SK-N-SH (cell line): ENCODE measurements at regions of chr4 and their contacts with region 1.

Region 1: DNA sequence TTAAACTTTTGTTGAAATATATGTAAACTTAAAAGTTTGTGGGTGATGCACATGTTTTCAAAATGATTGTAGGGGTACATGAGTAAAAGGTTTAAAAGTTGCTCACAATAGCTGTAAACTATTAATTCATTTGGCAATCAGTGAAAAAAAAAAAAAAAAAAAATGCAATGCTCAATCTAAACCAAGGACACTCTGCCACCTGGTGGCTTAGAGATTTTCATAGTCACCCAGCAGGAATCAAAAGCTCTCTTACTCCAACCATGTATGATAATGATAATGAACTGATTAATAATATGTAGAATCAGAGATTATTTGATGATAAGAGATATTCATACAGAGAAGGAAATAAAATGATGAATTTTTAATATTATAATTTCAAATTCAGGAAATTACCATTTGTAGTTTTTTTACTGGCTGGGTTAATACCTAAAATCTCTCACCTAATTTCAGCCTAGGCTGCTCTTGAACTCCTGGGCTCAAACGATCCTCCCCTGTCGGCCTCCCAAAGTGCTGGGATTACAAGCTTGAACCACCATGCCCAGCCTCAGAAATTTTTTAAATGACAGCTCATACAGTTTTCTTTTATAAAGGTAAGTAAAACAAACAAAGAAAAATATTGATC is 46.9 kb upstream of the SLC25A4 start:
- DNase-seq: peak; percentile 60
- H3K4me3 ChIP-seq: no peak overlapping the region
- H3K27ac ChIP-seq: no peak overlapping the region
- H3K4me1 ChIP-seq: peaks cover 0 to 6% of the 10 kb centered on the region in 2 experiments; a peak in 1 of 4 replicates
- H3K27me3 ChIP-seq: no peaks in the 10 kb centered on the region
- CTCF ChIP-seq: peak; percentile 77
- EP300 ChIP-seq: no peak
- RAD21 ChIP-seq: peak; percentile 82

Region 2: GRCh38 chr4:185005216-185005819 is 90.8 kb before region 1 on chr4:
- CTCF ChIA-PET with region 1: interaction called, 29 read pairs
- POLR2A ChIA-PET with region 1: no interaction called
- DNase-seq: peak; percentile 89
- H3K4me3 ChIP-seq: peak overlapping the region; percentile 4 to 35; a peak in 2 of 4 replicates
- H3K27ac ChIP-seq: no peak overlapping the region
- H3K4me1 ChIP-seq: peaks cover 0 to 5% of the 10 kb centered on the region in 2 experiments; a peak in 1 of 4 replicates
- H3K27me3 ChIP-seq: peaks cover 10% of the 10 kb centered on the region; the same call in 1 of the 2 replicates
- CTCF ChIP-seq: peak; percentile 92
- EP300 ChIP-seq: no peak
- RAD21 ChIP-seq: peak; percentile 82

Region 3: DNA sequence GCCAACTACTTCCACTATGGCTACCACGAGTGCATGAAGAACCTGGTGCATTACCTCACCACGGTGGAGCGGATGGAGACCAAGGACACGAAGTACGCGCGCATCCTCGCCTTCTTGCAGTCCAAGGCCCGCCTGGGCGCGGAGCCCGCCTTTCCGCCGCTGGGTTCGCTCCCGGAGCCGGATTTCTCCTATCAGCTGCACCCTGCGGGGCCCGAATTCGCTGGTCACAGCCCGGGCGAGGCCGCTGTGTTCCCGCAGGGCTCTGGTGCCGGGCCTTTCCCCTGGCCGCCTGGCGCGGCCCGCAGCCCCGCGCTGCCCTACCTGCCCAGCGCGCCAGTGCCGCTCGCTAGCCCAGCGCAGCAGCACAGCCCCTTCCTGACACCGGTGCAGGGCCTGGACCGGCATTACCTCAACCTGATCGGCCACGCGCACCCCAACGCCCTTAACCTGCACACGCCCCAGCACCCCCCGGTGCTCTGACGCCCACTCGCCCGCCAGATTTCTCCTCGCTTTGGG is 75.8 kb before region 1 on chr4:
- CTCF ChIA-PET with region 1: interaction called, 19 read pairs
- POLR2A ChIA-PET with region 1: no interaction called
- DNase-seq: peak; percentile 48
- H3K4me3 ChIP-seq: no peak overlapping the region
- H3K27ac ChIP-seq: no peak overlapping the region
- H3K4me1 ChIP-seq: no peaks in the 10 kb centered on the region
- H3K27me3 ChIP-seq: peaks cover 49% of the 10 kb centered on the region
- CTCF ChIP-seq: no peak
- EP300 ChIP-seq: no peak
- RAD21 ChIP-seq: no peak

Region 4: DNA sequence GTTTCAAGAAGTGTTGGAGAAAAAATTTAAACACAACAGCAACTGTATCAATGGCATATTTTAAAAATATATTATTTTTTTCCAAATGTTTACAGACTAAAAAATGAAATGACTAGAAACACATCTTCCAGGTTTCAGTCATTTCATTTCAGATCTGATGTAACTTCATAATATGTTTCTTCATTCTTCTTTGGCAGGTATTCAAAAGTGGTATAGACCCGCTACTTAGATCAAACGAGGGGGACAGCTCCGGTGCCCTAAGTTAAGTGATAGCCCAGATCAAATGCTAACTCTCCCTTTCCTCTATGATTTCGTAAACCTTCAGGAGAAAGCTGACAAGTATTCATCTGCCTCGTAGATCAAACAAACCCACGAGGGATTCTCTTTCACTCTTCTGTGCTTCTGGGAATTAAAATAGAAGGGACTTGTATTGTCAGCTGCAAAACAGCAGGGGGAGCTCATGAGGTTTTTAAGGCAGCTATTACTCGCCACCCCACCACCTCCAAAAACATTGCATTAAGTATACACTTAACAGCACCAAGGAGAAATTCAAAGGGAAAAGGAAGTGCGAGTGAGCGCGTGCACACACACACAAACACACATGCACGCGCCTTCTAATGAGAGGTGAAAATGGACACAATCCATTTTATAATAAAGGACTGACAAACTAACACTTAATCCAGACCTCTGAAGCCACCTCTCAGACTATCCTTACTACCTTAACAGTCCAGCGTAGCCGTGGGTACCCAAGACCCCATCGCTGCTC is 56.5 kb before region 1 on chr4:
- CTCF ChIA-PET with region 1: interaction called, 157 read pairs
- POLR2A ChIA-PET with region 1: no interaction called
- DNase-seq: peak; percentile 74
- H3K4me3 ChIP-seq: peak overlapping the region in 1 of 2 experiments; percentile 12; a peak in 2 of 4 replicates
- H3K27ac ChIP-seq: no peak overlapping the region
- H3K4me1 ChIP-seq: peaks cover 0 to 2% of the 10 kb centered on the region in 2 experiments; a peak in 1 of 4 replicates
- H3K27me3 ChIP-seq: no peaks in the 10 kb centered on the region; the same call in 1 of the 2 replicates
- CTCF ChIP-seq: peak; percentile 92
- EP300 ChIP-seq: no peak
- RAD21 ChIP-seq: peak; percentile 89

Region 5: DNA sequence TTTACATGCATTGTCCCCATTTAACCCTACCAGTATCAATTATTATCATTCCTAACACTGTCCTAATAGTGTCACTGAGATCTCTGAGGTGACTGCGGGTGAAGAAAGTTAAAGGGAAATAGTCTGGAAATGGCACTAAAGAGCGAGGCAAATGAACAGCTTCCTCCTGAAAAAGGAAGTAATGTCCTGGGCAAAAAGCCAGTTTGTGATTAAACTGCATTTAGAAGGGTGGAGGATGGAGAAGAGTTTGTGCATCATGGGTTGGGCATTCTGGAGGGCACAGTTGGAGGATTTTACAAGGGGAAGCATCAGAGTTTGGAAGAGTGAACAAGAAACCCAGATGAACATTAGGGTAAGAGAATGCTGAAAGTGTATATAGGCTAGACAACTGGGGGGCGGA is 13.6 kb before region 1 on chr4:
- CTCF ChIA-PET with region 1: interaction called, 25 read pairs
- POLR2A ChIA-PET with region 1: no interaction called
- DNase-seq: no peak
- H3K4me3 ChIP-seq: no peak overlapping the region
- H3K27ac ChIP-seq: no peak overlapping the region
- H3K4me1 ChIP-seq: no peaks in the 10 kb centered on the region
- H3K27me3 ChIP-seq: peaks cover 11% of the 10 kb centered on the region; the same call in 1 of the 2 replicates
- CTCF ChIP-seq: no peak
- EP300 ChIP-seq: no peak
- RAD21 ChIP-seq: no peak

Region 6: GRCh38 chr4:185122681-185123345 is 26.7 kb after region 1 on chr4:
- CTCF ChIA-PET with region 1: interaction called, 12 read pairs
- POLR2A ChIA-PET with region 1: no interaction called
- DNase-seq: no peak
- H3K4me3 ChIP-seq: no peak overlapping the region
- H3K27ac ChIP-seq: no peak overlapping the region
- H3K4me1 ChIP-seq: peaks cover 10 to 12% of the 10 kb centered on the region in 2 experiments; a peak in 1 of 4 replicates
- H3K27me3 ChIP-seq: no peaks in the 10 kb centered on the region
- CTCF ChIP-seq: no peak
- EP300 ChIP-seq: no peak
- RAD21 ChIP-seq: no peak

Region 7: DNA sequence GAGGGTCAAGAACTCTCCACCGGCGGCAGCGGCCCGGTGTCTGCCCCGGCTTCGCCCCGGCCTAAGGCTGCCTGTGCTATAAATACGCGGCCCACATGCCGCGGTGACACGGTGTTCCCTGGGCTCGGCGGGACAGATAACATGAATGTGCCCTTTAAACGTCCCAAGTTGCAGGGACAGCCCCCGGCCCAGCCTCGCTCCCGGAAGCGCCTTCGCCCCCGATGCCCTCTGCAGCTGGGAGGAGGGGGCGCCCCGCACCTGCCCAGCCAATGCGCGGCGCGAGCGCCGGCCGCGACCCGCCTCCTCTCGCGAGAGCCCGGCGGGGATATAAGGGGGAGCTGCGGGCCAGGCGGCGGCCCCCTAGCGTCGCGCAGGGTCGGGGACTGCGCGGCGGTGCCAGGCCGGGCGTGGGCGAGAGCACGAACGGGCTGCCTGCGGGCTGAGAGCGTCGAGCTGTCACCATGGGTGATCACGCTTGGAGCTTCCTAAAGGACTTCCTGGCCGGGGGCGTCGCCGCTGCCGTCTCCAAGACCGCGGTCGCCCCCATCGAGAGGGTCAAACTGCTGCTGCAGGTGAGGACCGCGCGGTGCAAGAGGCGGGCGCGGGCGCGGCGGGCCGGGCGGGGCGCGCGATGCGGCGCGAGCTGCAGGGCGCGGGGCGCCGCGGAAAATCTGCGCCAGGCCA is 46.9 kb after region 1 on chr4 and contains the start of gene SLC25A4:
- CTCF ChIA-PET with region 1: interaction called, 13 read pairs
- POLR2A ChIA-PET with region 1: no interaction called
- DNase-seq: peak; percentile 99
- H3K4me3 ChIP-seq: peak within 1 kb of the TSS; percentile 72 to 88
- H3K27ac ChIP-seq: peak within 1 kb of the TSS in 1 of 2 experiments; percentile 83; a peak in 2 of 4 replicates
- H3K4me1 ChIP-seq: peaks cover 0 to 23% of the 10 kb centered on the region in 2 experiments; a peak in 2 of 4 replicates
- H3K27me3 ChIP-seq: no peaks in the 10 kb centered on the region
- CTCF ChIP-seq: peak; percentile 51
- EP300 ChIP-seq: no peak
- RAD21 ChIP-seq: no peak
- polyA plus RNA-seq, gene SLC25A4: 36.2 and 40.5 TPM in 2 replicates